ENCODE measurements at regions of chr1 and their contacts with region 1.

Region 1: DNA sequence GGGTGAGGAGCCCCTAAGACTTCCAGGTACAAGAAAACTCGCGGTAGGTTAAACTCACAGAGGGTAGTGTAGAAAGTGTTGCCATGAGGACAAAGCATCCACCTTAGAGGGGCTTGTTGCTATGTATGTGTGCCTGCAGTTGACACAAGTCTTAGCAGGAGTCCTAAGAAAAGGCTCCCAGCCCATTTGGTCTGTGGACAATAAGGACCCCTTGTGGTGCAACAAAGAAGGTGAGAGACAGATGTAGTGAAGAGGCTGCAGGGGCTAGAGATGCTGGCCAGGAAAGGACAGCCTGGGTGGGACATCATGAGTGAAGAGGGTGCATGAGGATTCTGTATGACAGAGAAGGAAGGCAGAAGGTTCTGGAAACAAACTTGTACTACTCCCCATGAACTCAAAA is 36.3 kb upstream of the IL10 start:
- DNase-seq: no peak
- H3K27ac ChIP-seq: no peak overlapping the region
- CTCF ChIP-seq: no peak

Region 2: GRCh38 chr1:206826405-206826804 is 17.8 kb after region 1 on chr1:
- CTCF ChIA-PET with region 1: interaction called, 12 read pairs
- POLR2A ChIA-PET with region 1: no interaction called
- DNase-seq: peak; percentile 58
- H3K27ac ChIP-seq: peak overlapping the region; percentile 50
- CTCF ChIP-seq: no peak

Region 3: GRCh38 chr1:206982216-206982615 is 173.6 kb after region 1 on chr1:
- CTCF ChIA-PET with region 1: interaction called, 14 read pairs
- POLR2A ChIA-PET with region 1: no interaction called
- DNase-seq: peak; percentile 70
- H3K27ac ChIP-seq: no peak overlapping the region
- CTCF ChIP-seq: peak; percentile 73